Activated CD8-positive, alpha-beta T cell treated with anti-CD3 and anti-CD28 coated beads for 36 hours (primary cell): ENCODE measurements at regions of chrX and their contacts with region 1.

Region 1: GRCh38 chrX:11787564-11787963 is 29.5 kb downstream of the MSL3 start:
- DNase-seq: peak; percentile 84
- ATAC-seq: peak; percentile 81
- H3K4me3 Mint-ChIP-seq: peak overlapping the region; percentile 61
- H3K27ac Mint-ChIP-seq: peak overlapping the region; percentile 57
- H3K4me1 Mint-ChIP-seq: peaks cover 26% of the 10 kb centered on the region
- H3K27me3 Mint-ChIP-seq: no peaks in the 10 kb centered on the region
- CTCF ChIP-seq: peak; percentile 64

Region 2: DNA sequence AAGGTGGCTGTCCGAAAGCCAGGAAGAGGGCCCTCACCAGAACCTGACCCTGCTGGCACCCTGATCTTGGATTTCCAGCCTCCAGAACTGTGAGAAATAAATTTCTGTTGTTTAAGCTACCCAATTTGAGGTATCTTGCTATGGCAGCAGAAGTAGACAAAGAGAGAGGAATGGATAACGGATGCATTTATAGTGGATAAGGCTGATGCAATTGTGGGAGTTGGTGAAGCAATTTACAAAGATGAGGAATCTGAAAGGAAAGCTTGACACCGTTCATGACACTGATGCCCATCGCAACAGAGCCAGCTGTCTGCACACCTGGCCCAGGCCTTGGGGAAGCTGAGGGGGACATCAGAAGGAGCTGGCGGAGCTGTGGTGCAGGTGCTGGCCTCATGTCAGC is 65.3 kb before region 1 on chrX:
- CTCF ChIA-PET with region 1: no interaction called
- POLR2A ChIA-PET with region 1: no interaction called
- intact Hi-C with region 1: no loop called
- DNase-seq: no peak
- ATAC-seq: no peak
- H3K4me3 Mint-ChIP-seq: no peak overlapping the region
- H3K27ac Mint-ChIP-seq: no peak overlapping the region
- H3K4me1 Mint-ChIP-seq: no peaks in the 10 kb centered on the region
- H3K27me3 Mint-ChIP-seq: no peaks in the 10 kb centered on the region
- CTCF ChIP-seq: no peak

Region 3: GRCh38 chrX:11770320-11770719 is 17.2 kb before region 1 on chrX:
- CTCF ChIA-PET with region 1: interaction called, 17 read pairs
- POLR2A ChIA-PET with region 1: no interaction called
- intact Hi-C with region 1: no loop called
- DNase-seq: peak; percentile 69
- ATAC-seq: peak; percentile 79
- H3K4me3 Mint-ChIP-seq: peak overlapping the region; percentile 29
- H3K27ac Mint-ChIP-seq: peak overlapping the region; percentile 93
- H3K4me1 Mint-ChIP-seq: peaks cover 50% of the 10 kb centered on the region
- H3K27me3 Mint-ChIP-seq: no peaks in the 10 kb centered on the region
- CTCF ChIP-seq: peak; percentile 58

Region 4: DNA sequence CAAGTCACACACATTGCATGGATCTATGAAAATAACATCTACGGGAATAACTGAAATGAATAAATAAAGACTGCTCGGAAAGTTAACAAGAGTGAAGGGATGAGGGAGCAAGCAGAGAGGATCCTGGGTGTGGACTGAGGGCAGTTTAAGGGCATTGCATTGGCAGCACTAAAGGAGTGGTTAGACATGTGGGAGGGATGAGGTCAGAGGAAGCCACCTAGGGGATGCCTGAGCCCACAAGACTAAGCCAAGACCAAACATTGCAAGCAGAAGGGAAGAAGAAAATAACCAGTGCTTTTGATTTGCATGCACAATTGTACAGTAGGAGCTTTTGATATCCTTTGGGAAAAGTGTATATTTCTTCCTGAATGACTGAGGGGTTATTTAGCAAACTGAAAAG is 76.6 kb after region 1 on chrX:
- CTCF ChIA-PET with region 1: no interaction called
- POLR2A ChIA-PET with region 1: no interaction called
- intact Hi-C with region 1: no loop called
- DNase-seq: peak; percentile 9
- ATAC-seq: no peak
- H3K4me3 Mint-ChIP-seq: no peak overlapping the region
- H3K27ac Mint-ChIP-seq: no peak overlapping the region
- H3K4me1 Mint-ChIP-seq: peaks cover 3% of the 10 kb centered on the region
- H3K27me3 Mint-ChIP-seq: no peaks in the 10 kb centered on the region
- CTCF ChIP-seq: no peak

Region 5: GRCh38 chrX:11908371-11908770 is 120.8 kb after region 1 on chrX:
- CTCF ChIA-PET with region 1: interaction called, 9 read pairs
- POLR2A ChIA-PET with region 1: no interaction called
- intact Hi-C with region 1: loop called (anchors 1 kb)
- DNase-seq: peak; percentile 34
- ATAC-seq: peak; percentile 75
- H3K4me3 Mint-ChIP-seq: no peak overlapping the region
- H3K27ac Mint-ChIP-seq: no peak overlapping the region
- H3K4me1 Mint-ChIP-seq: peaks cover 7% of the 10 kb centered on the region
- H3K27me3 Mint-ChIP-seq: no peaks in the 10 kb centered on the region
- CTCF ChIP-seq: peak; percentile 52

Region 6: DNA sequence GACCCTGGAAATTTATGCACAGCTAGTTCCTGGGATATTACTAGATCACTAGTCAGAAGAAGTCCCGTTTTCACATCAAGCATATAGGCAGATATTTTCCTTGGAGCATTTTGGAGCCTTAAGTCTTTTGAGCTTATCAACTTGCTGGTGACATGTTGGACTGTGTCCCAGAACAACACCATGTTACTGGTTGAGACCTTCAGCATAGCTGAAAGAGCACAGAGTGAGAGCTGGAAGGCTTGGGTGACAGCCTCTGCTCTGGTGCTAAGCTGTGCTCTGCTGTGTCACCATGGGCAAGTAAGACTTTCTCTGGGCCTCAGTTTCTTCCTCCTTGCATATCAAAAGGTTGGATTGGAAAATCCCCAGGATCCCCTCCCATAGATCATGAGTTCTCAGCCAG is 234.1 kb after region 1 on chrX:
- CTCF ChIA-PET with region 1: no interaction called
- POLR2A ChIA-PET with region 1: no interaction called
- intact Hi-C with region 1: no loop called
- DNase-seq: no peak
- ATAC-seq: no peak
- H3K4me3 Mint-ChIP-seq: no peak overlapping the region
- H3K27ac Mint-ChIP-seq: no peak overlapping the region
- H3K4me1 Mint-ChIP-seq: no peaks in the 10 kb centered on the region
- H3K27me3 Mint-ChIP-seq: peaks cover 7% of the 10 kb centered on the region
- CTCF ChIP-seq: no peak